ENCODE measurements at regions of chr11 and their contacts with region 1.

Region 1: DNA sequence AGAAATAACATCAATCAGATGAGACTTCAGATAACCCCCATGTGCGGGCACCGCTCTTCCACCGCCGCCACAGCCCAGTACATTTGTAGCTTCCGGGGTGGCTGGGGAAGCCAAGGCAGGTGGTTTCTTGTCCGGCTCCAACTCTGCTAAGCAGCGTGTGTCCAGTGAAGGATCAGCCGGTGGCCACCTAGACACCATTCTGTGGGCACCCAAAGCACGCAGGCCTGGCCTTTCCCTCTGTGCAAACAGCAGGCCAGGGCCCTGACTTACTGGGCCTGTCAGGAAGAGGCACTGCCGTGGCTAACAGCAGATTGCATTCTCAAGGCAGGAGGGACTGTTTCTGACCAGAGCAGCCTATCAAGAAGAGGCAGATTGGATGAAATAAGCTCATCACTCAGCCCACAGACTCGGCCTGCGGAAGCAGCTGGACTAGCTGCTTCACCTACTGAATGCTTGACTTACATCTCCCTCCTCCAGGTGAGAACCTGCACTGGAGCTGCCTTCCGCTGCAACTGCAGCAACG is 74.8 kb downstream of the ETS1 start:
- DNase-seq: peak; percentile 60
- ATAC-seq: peak; percentile 40
- H3K4me3 Mint-ChIP-seq: peak overlapping the region; percentile 96
- H3K27ac Mint-ChIP-seq: peak overlapping the region; percentile 98
- H3K4me1 Mint-ChIP-seq: peaks cover 88% of the 10 kb centered on the region
- H3K27me3 Mint-ChIP-seq: no peaks in the 10 kb centered on the region

Region 2: GRCh38 chr11:128497061-128497775 is 15.3 kb before region 1 on chr11:
- CTCF ChIA-PET with region 1: interaction called, 13 read pairs
- POLR2A ChIA-PET with region 1: interaction called, 7 read pairs
- intact Hi-C with region 1: no loop called
- DNase-seq: peak; percentile 52
- ATAC-seq: peak; percentile 8
- H3K4me3 Mint-ChIP-seq: peak overlapping the region; percentile 70
- H3K27ac Mint-ChIP-seq: peak overlapping the region; percentile 99
- H3K4me1 Mint-ChIP-seq: peaks cover 95% of the 10 kb centered on the region
- H3K27me3 Mint-ChIP-seq: no peaks in the 10 kb centered on the region